ENCODE measurements at regions of chr18 and their contacts with region 1.

Region 1: GRCh38 chr18:23207191-23207955 is 72.1 kb downstream of the CABLES1 start:
- DNase-seq: no peak
- ATAC-seq: peak; percentile 91
- H3K4me3 Mint-ChIP-seq: no peak overlapping the region
- H3K27ac Mint-ChIP-seq: peak overlapping the region; percentile 49
- H3K4me1 Mint-ChIP-seq: peaks cover 9% of the 10 kb centered on the region
- H3K27me3 Mint-ChIP-seq: no peaks in the 10 kb centered on the region
- CTCF ChIP-seq: peak; percentile 87

Region 2: DNA sequence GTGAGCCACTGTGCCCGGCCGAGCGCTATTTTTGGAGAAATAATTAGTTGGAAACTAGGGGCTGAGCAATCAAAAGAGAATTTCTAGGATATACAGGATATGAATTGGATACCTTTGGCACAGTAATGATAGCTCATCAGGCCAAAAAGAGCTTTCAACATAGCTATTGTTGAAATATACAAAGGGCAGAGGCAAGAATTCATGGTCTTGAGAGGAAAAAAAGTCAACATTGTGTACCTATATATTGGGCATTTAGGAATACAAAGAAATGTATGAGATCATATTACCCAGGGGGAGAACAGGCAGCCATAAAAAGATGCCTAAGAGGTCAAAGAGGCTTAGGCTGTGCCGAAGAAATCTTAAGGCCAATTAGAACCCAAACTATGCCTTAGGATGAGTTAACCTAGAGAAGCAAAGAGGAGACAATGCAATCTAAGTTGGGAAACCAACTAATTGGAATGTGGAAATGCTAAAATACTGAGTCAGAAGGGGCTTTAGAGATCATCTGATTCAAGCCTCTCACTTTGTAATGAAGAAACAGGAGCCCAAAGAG is 175.3 kb before region 1 on chr18:
- CTCF ChIA-PET with region 1: interaction called, 20 read pairs
- POLR2A ChIA-PET with region 1: no interaction called
- DNase-seq: no peak
- ATAC-seq: no peak
- H3K4me3 Mint-ChIP-seq: no peak overlapping the region
- H3K27ac Mint-ChIP-seq: no peak overlapping the region
- H3K4me1 Mint-ChIP-seq: peaks cover 13% of the 10 kb centered on the region
- H3K27me3 Mint-ChIP-seq: no peaks in the 10 kb centered on the region
- CTCF ChIP-seq: no peak

Region 3: GRCh38 chr18:23143016-23143814 is 64.2 kb before region 1 on chr18:
- CTCF ChIA-PET with region 1: interaction called, 14 read pairs
- POLR2A ChIA-PET with region 1: no interaction called
- DNase-seq: no peak
- ATAC-seq: no peak; the same call in 1 of the 2 replicates
- H3K4me3 Mint-ChIP-seq: no peak overlapping the region
- H3K27ac Mint-ChIP-seq: peak overlapping the region; percentile 67
- H3K4me1 Mint-ChIP-seq: peaks cover 79% of the 10 kb centered on the region
- H3K27me3 Mint-ChIP-seq: no peaks in the 10 kb centered on the region
- CTCF ChIP-seq: no peak

Region 4: DNA sequence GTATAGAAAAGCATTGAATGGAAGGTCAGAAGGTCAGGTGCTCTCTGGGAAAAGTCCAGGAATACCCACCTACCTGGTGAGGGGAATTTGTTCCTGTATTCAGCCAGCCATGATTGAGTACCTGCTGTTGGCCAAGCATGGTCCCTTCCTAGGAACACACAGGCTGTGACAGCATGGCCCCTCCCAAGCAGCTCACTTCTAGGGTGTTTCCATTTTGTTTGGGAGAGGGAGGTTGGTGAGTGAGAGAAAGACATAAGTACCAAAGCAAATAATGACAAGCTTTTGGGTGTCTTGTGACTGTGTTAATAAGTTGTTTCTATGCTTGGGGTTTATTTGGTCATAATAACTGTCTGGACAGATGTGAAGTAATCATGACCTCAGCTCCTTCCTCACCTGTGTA is 25.8 kb before region 1 on chr18:
- CTCF ChIA-PET with region 1: interaction called, 11 read pairs
- POLR2A ChIA-PET with region 1: no interaction called
- DNase-seq: no peak
- ATAC-seq: no peak
- H3K4me3 Mint-ChIP-seq: no peak overlapping the region
- H3K27ac Mint-ChIP-seq: no peak overlapping the region
- H3K4me1 Mint-ChIP-seq: peaks cover 54% of the 10 kb centered on the region
- H3K27me3 Mint-ChIP-seq: no peaks in the 10 kb centered on the region
- CTCF ChIP-seq: no peak

Region 5: GRCh38 chr18:23220355-23220754 is 13.0 kb after region 1 on chr18:
- CTCF ChIA-PET with region 1: interaction called, 37 read pairs
- POLR2A ChIA-PET with region 1: no interaction called
- DNase-seq: no peak
- ATAC-seq: no peak
- H3K4me3 Mint-ChIP-seq: no peak overlapping the region
- H3K27ac Mint-ChIP-seq: no peak overlapping the region
- H3K4me1 Mint-ChIP-seq: 0 out of 2 replicates have a peak, but pooled peaks cover 3% of the 10 kb centered on the region
- H3K27me3 Mint-ChIP-seq: no peaks in the 10 kb centered on the region
- CTCF ChIP-seq: no peak

Region 6: DNA sequence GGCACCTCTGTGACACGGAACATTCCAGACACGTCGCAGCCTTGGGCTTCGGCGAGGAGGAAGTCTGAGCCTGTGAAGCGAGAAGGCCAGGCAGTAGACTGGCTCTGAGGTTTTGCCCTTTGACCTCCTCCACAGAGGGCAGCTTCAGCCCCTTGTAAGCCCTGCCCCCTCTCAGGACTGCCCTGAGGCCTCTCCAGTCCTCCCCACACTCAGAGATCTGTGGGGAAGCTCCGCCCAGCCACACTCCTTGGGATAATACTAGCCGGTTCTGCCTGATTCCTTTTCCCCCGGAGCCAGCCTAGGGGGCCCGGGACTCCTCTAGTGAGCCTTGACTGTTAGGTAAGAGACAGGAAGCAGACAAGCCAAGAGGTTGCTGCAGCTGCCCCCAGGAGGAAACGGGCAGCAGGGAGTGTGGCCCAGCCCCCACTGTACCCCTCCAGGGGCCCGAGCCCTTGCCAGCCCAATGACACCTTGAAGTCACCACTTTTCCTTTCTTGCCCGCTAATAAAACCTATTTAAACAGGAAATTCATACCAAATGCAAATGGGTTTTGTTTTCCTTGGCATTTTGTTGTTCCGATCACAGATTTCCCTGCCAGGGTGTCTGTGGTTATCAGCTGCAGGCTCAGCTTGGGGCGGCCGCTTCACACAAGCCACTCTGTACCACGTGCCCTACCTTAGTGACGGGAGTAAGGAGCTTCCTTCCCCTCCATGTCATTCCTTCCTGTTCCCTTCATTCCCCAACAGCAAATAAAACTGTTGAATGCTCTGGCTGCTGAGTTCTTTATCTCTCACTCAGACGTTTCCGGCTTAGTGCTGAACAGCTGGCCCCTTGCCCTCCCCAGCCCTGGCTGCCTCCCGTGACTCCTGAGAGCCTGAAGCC is 52.6 kb after region 1 on chr18:
- CTCF ChIA-PET with region 1: interaction called, 19 read pairs
- POLR2A ChIA-PET with region 1: no interaction called
- DNase-seq: peak; percentile 74
- ATAC-seq: peak; percentile 88
- H3K4me3 Mint-ChIP-seq: peak overlapping the region; percentile 31; the same call in 1 of the 2 replicates
- H3K27ac Mint-ChIP-seq: peak overlapping the region; percentile 97
- H3K4me1 Mint-ChIP-seq: peaks cover 51% of the 10 kb centered on the region
- H3K27me3 Mint-ChIP-seq: 0 out of 2 replicates have a peak, but pooled peaks cover 2% of the 10 kb centered on the region
- CTCF ChIP-seq: no peak